ENCODE measurements at regions of chr6 and their contacts with region 1.

Region 1: DNA sequence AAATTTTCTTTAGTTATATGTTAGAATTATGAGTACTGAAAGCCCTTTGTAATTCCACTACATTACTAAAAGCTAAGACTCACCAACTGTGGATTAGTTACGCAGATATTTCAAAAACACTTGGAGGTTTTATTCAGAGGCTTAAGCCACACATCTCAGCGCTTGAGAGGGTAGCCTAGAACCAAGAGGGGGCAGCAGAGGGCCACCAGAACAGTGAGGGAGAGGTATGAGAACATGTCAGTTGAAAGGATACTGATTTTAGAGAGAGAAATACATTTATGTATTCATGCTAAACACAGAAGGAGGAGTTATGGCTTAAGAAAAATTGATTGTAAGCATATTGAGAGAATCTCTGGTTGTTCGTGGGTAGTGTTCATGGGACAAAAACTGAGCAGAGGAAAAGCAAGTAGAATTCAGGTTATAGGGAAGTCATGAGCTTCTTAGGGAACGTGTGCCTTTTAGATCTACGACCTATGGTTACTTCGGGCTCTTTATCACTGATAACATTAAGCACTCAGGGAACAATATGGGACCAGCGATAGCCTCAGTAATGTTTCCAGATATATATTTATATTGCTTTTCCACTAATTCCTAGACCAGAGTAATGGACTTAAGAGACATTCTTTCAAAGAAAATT is 20.4 kb upstream of the SERINC1 start:
- DNase-seq: peak; percentile 67
- ATAC-seq: peak; percentile 99
- H3K4me3 ChIP-seq: no peak overlapping the region
- H3K27ac ChIP-seq: no peak overlapping the region
- H3K4me1 ChIP-seq: no peaks in the 10 kb centered on the region; the same call in 1 of the 2 replicates
- H3K27me3 ChIP-seq: no peaks in the 10 kb centered on the region
- CTCF ChIP-seq: peak; percentile 85
- POLR2A ChIP-seq: no peak
- RAD21 ChIP-seq: peak; percentile 79

Region 2: DNA sequence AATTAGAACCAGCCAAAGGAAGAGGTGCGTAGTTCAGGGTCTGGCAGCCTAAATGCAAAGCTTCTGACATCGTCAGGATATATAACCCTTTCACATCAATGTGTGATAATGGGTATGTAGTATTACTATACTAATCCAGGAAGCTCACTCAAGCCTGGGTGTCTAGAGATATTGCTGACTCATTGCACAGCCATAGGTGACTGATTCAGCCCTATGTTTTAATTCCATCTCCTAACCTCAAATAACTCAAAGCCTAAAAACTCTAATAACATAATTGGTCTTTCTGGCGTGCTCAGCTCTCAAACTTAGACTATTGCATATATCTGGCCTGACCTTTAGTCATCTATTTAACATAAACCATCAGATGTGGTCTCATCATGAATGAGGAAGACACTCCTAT is 1816.2 kb before region 1 on chr6:
- CTCF ChIA-PET with region 1: no interaction called
- POLR2A ChIA-PET with region 1: no interaction called
- dilution Hi-C with region 1: no loop called
- in situ Hi-C with region 1: no loop called
- intact Hi-C with region 1: no loop called
- DNase-seq: no peak
- ATAC-seq: no peak
- H3K4me3 ChIP-seq: no peak overlapping the region
- H3K27ac ChIP-seq: no peak overlapping the region
- H3K4me1 ChIP-seq: no peaks in the 10 kb centered on the region
- H3K27me3 ChIP-seq: no peaks in the 10 kb centered on the region
- CTCF ChIP-seq: no peak
- POLR2A ChIP-seq: no peak
- RAD21 ChIP-seq: no peak

Region 3: DNA sequence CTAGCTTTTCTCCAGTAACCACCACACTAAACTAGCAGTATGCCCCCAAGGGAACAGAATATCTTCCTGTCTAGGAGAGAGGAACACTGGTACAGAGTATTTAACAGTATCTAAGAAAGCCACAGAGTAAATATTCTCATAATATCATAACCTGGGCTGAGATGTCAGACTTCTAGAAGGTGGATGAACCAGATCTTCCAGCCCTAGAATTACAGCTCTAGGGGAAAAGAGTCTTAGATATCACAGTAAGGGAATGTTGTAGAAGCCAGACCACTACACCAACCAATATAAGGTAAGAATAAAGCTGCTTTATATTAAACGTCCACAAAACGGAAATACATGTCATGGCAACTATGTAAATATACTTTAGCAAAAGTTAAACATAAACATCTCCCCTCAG is 32.8 kb before region 1 on chr6:
- CTCF ChIA-PET with region 1: no interaction called
- POLR2A ChIA-PET with region 1: no interaction called
- dilution Hi-C with region 1: no loop called
- in situ Hi-C with region 1: no loop called
- intact Hi-C with region 1: no loop called
- DNase-seq: peak; percentile 22
- ATAC-seq: peak; percentile 73
- H3K4me3 ChIP-seq: no peak overlapping the region
- H3K27ac ChIP-seq: no peak overlapping the region
- H3K4me1 ChIP-seq: peaks cover 2% of the 10 kb centered on the region; the same call in 1 of the 2 replicates
- H3K27me3 ChIP-seq: no peaks in the 10 kb centered on the region
- CTCF ChIP-seq: no peak
- POLR2A ChIP-seq: no peak
- RAD21 ChIP-seq: no peak

Region 4: GRCh38 chr6:122839477-122839876 is 347.4 kb after region 1 on chr6:
- CTCF ChIA-PET with region 1: interaction called, 3 read pairs
- POLR2A ChIA-PET with region 1: no interaction called
- dilution Hi-C with region 1: no loop called
- in situ Hi-C with region 1: loop called (anchors 10 kb)
- intact Hi-C with region 1: loop called (anchors 5 kb)
- DNase-seq: peak; percentile 50
- ATAC-seq: peak; percentile 96
- H3K4me3 ChIP-seq: no peak overlapping the region
- H3K27ac ChIP-seq: no peak overlapping the region
- H3K4me1 ChIP-seq: no peaks in the 10 kb centered on the region
- H3K27me3 ChIP-seq: no peaks in the 10 kb centered on the region
- CTCF ChIP-seq: peak; percentile 79
- POLR2A ChIP-seq: no peak
- RAD21 ChIP-seq: peak; percentile 67

Region 5: GRCh38 chr6:123316733-123317323 is 824.8 kb after region 1 on chr6:
- CTCF ChIA-PET with region 1: no interaction called
- POLR2A ChIA-PET with region 1: no interaction called
- dilution Hi-C with region 1: no loop called
- in situ Hi-C with region 1: no loop called
- intact Hi-C with region 1: loop called (anchors 5 kb)
- DNase-seq: peak; percentile 4
- ATAC-seq: no peak
- H3K4me3 ChIP-seq: no peak overlapping the region
- H3K27ac ChIP-seq: no peak overlapping the region
- H3K4me1 ChIP-seq: no peaks in the 10 kb centered on the region
- H3K27me3 ChIP-seq: no peaks in the 10 kb centered on the region
- CTCF ChIP-seq: peak; percentile 46
- POLR2A ChIP-seq: no peak
- RAD21 ChIP-seq: peak; percentile 9; the same call in 1 of the 2 replicates

Measured in IMR-90 (cell line).